Naive thymus-derived CD4-positive, alpha-beta T cell (primary cell): ENCODE measurements at regions of chr1 and their contacts with region 1.

Region 1: GRCh38 chr1:86499987-86500593 is 31.4 kb downstream of the CLCA1 start:
- DNase-seq: peak in 6 of 9 donors; percentile 55 to 76 (median 73)
- ATAC-seq: peak; percentile 92
- H3K4me3 ChIP-seq: no peak overlapping the region
- H3K4me3 Mint-ChIP-seq: no peak overlapping the region
- H3K27ac ChIP-seq: no peak overlapping the region
- H3K27ac Mint-ChIP-seq: no peak overlapping the region
- H3K4me1 ChIP-seq: peaks cover 0 to 8% of the 10 kb centered on the region in 2 donors
- H3K4me1 Mint-ChIP-seq: peaks cover 0 to 18% (median 10%) of the 10 kb centered on the region in 7 donors
- H3K27me3 ChIP-seq: no peaks in the 10 kb centered on the region
- H3K27me3 Mint-ChIP-seq: peaks cover 6 to 46% (median 14%) of the 10 kb centered on the region in 5 donors

Region 2: DNA sequence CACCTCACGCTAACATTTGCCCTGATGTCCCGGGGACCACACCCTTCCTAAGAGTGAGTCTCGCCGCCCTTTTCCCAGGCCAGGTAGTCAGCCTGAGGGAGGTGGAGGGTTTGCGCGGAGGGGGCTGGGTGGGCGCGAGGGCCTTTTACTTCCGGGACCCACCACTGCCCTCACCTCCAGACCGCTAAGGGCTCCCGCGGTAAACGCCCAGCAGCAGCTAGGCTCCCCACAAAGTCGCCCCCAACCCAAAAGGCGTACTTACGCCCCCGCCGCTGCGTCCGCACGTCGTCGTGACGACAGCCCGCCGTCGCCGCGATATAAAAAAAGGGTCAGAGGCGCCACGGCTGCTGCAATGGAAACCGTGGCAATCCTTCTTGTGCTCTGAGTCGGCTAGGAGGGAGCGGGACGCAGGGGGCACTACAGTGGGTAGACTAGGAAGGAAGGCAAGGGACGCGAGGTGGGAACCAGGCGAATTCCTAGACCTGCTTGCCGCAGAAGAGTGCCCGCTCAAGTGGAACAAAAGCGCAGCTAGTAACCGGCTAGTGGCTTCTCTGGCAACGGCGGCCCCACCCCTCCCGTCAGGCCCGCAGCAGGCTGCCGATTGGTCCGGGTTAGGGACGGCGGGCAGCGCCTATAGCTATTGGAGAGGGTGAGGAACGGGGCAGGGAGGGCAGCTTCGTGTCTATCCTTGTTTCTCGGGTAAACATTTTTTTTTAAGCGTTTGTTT is 104.2 kb before region 1 on chr1 and contains the start of gene ODF2L:
- CTCF ChIA-PET with region 1: interaction called, 15 read pairs
- POLR2A ChIA-PET with region 1: interaction called, 4 read pairs
- intact Hi-C with region 1: loop called in 1 of 2 experiments (anchors 1 kb)
- DNase-seq: peak; percentile 73 to 92 (median 90)
- ATAC-seq: peak; percentile 100
- H3K4me3 ChIP-seq: peak within 1 kb of the TSS; percentile 80
- H3K4me3 Mint-ChIP-seq: peak within 1 kb of the TSS; percentile 90 to 100 (median 98)
- H3K27ac ChIP-seq: peak within 1 kb of the TSS; percentile 90
- H3K27ac Mint-ChIP-seq: peak within 1 kb of the TSS; percentile 94 to 99 (median 98)
- H3K4me1 ChIP-seq: peaks cover 17 to 20% of the 10 kb centered on the region in 2 donors
- H3K4me1 Mint-ChIP-seq: peaks cover 23 to 70% (median 58%) of the 10 kb centered on the region in 7 donors
- H3K27me3 ChIP-seq: no peaks in the 10 kb centered on the region
- H3K27me3 Mint-ChIP-seq: peaks cover 0 to 7% (median 0%) of the 10 kb centered on the region in 5 donors
- total RNA-seq, gene ODF2L: 50.3 to 75.3 (median 52.2) TPM

Region 3: GRCh38 chr1:86470859-86471258 is 29.2 kb before region 1 on chr1:
- CTCF ChIA-PET with region 1: interaction called, 4 read pairs
- POLR2A ChIA-PET with region 1: no interaction called
- intact Hi-C with region 1: loop called in 1 of 2 experiments (anchors 1 kb)
- DNase-seq: no peak
- ATAC-seq: no peak
- H3K4me3 ChIP-seq: no peak overlapping the region
- H3K4me3 Mint-ChIP-seq: no peak overlapping the region
- H3K27ac ChIP-seq: no peak overlapping the region
- H3K27ac Mint-ChIP-seq: no peak overlapping the region
- H3K4me1 ChIP-seq: no peaks in the 10 kb centered on the region
- H3K4me1 Mint-ChIP-seq: peaks cover 0 to 3% (median 0%) of the 10 kb centered on the region in 7 donors
- H3K27me3 ChIP-seq: peaks cover 0 to 3% of the 10 kb centered on the region in 2 donors
- H3K27me3 Mint-ChIP-seq: peaks cover 7 to 35% (median 11%) of the 10 kb centered on the region in 5 donors

Region 4: GRCh38 chr1:86965012-86965826 is 465.1 kb after region 1 on chr1:
- CTCF ChIA-PET with region 1: no interaction called
- POLR2A ChIA-PET with region 1: no interaction called
- intact Hi-C with region 1: loop called in 1 of 2 experiments (anchors 10 kb)
- DNase-seq: peak in 6 of 9 donors; percentile 1 to 31 (median 15)
- ATAC-seq: peak; percentile 48
- H3K4me3 ChIP-seq: no peak overlapping the region
- H3K4me3 Mint-ChIP-seq: peak overlapping the region in 1 of 10 donors; percentile 36
- H3K27ac ChIP-seq: no peak overlapping the region
- H3K27ac Mint-ChIP-seq: peak overlapping the region in 3 of 9 donors; percentile 56 to 69 (median 59)
- H3K4me1 ChIP-seq: no peaks in the 10 kb centered on the region
- H3K4me1 Mint-ChIP-seq: peaks cover 0 to 5% (median 0%) of the 10 kb centered on the region in 7 donors
- H3K27me3 ChIP-seq: no peaks in the 10 kb centered on the region
- H3K27me3 Mint-ChIP-seq: no peaks in the 10 kb centered on the region